Breast epithelium (tissue), 4 donors: ENCODE measurements at regions of chr3 and their contacts with region 1.

Region 1: DNA sequence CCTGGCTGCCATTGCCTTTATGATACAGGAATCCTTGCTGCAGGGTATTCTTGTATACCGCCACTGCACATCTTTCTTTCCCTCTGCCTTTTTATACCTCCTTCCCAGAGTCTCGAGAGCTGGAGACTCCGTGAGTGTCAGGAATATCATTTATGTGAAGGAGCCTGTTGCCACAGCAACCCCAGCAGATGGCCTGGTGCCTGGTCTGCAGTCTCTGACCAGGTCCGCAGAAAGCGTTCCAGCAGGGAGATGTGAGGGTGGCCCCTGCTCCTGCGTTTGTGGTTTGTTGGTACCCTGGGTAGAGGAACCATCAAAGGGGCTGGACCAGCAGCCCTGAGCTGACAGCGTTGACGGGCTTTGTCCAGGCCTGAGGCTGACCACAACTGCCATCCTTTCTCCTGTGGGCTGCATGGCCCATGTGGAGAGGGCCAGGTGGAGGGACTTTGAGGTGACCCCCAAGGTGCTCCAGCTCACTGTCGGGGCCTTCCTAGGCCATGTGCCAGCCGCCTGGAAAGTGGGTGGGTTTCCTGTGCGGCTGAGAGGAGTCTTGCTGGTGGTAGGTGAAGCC is 93.2 kb upstream of the PLXNA1 start:
- DNase-seq: peak in 1 of 2 donors; percentile 15
- H3K4me3 ChIP-seq: no peak overlapping the region
- H3K27ac ChIP-seq: no peak overlapping the region
- H3K4me1 ChIP-seq: no peaks in the 10 kb centered on the region
- H3K27me3 ChIP-seq: no peaks in the 10 kb centered on the region
- CTCF ChIP-seq: no peak
- POLR2A ChIP-seq: no peak

Region 2: DNA sequence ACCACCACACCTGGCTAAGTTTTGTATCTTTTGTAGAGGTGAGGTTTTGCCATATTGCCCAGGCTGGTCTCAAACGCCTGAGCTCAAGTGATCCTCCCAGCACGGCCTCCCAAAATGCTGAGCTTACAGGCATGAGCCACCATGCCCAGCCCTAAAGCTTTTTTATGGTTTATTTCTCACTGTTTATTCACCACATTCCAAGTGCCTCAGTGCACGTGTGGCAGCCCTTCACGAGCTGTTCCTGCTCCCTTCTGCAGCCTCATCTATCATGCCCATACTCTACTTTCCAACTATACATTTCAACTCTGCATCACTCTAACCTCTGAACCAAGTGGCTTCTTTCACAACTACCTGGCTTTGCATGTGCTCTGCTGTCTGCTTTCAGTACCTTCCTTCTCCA is 1276.5 kb before region 1 on chr3:
- intact Hi-C with region 1: no loop called
- DNase-seq: no peak
- H3K4me3 ChIP-seq: no peak overlapping the region
- H3K27ac ChIP-seq: no peak overlapping the region
- H3K4me1 ChIP-seq: no peaks in the 10 kb centered on the region
- H3K27me3 ChIP-seq: no peaks in the 10 kb centered on the region
- CTCF ChIP-seq: no peak
- POLR2A ChIP-seq: no peak

Region 3: DNA sequence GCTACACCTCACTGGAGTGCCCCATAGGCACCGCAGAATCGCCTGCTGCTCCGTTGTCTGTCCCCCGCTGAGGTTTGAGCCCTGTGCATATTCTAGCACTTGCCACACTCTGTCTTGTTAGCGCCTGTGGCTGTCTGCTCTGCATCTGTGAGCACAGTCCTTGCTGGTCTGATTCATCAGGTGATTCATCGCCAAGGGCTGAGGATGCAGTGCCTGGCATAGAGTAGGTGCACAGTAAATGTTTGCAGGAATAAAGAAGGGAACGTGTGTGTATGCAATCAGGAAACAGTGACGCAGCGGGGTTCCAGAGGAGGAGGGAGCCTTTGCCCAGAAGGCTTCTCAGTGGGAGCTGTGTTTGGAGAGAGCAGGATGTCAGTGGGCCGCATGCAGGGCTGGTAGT is 30.8 kb before region 1 on chr3:
- intact Hi-C with region 1: loop called (anchors 1 kb)
- DNase-seq: no peak
- H3K4me3 ChIP-seq: no peak overlapping the region
- H3K27ac ChIP-seq: no peak overlapping the region
- H3K4me1 ChIP-seq: no peaks in the 10 kb centered on the region
- H3K27me3 ChIP-seq: no peaks in the 10 kb centered on the region
- CTCF ChIP-seq: no peak
- POLR2A ChIP-seq: no peak

Region 4: GRCh38 chr3:126870608-126871210 is 19.0 kb before region 1 on chr3:
- intact Hi-C with region 1: no loop called
- DNase-seq: no peak
- H3K4me3 ChIP-seq: no peak overlapping the region
- H3K27ac ChIP-seq: peak overlapping the region in 1 of 2 donors; percentile 48
- H3K4me1 ChIP-seq: no peaks in the 10 kb centered on the region
- H3K27me3 ChIP-seq: no peaks in the 10 kb centered on the region
- CTCF ChIP-seq: no peak
- POLR2A ChIP-seq: no peak